ENCODE measurements at regions of chr15 and their contacts with region 1.

Region 1: DNA sequence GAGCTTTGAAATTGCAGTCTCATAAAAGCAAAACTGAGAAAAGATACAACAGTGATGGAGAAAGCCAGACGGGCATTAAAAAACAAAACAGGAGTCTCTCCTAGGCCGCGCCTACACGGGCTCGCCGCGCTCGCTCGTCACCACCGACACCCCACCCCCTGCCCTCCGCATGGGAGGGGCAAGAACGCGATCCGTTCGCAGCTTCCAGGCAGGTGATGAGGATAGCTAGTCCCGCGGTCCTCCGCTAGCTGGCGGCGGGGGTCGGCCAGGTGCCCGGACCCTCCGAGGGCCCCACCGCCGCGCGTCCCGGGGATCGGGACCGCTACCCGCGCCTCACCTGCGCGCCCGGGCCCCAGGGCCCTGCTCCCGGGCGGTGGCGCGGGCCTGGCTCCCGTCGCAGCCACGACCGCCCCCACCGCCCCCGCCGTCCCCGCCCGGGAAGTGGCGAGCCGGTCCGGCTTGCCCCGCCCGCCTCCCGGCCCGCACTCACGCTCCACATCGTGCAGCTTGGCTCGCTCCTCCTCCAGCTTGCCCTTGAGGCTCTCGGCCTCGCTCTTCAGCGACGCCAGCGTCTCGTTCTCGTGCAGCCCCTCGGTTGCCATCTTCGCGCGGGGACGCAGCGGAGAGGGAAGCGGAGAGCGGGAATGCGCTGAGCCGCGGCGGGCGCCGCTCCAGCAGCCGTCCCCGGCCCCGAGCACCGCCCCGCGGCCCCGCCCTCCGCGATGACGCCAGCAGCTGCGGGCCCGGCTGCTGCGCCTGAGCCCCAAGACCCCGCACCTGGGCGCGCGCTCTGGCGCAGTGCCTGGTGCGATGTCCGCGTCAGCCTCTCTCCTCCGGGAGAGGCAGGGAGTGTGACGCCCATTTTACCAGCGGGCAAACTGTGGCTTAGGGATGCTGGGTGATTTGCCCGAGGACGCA is 11.7 kb downstream of the GNB5 start:
- DNase-seq: peak; percentile 91
- H3K4me3 Mint-ChIP-seq: peak overlapping the region; percentile 89
- H3K27ac Mint-ChIP-seq: peak overlapping the region; percentile 91
- H3K4me1 Mint-ChIP-seq: peaks cover 37% of the 10 kb centered on the region
- H3K27me3 Mint-ChIP-seq: no peaks in the 10 kb centered on the region

Region 2: GRCh38 chr15:51971375-51972133 is 208.0 kb before region 1 on chr15 and contains the start of gene LEO1:
- CTCF ChIA-PET with region 1: interaction called, 6 read pairs
- POLR2A ChIA-PET with region 1: interaction called, 18 read pairs
- DNase-seq: peak; percentile 92
- H3K4me3 Mint-ChIP-seq: peak within 1 kb of the TSS; percentile 93
- H3K27ac Mint-ChIP-seq: peak within 1 kb of the TSS; percentile 87
- H3K4me1 Mint-ChIP-seq: peaks cover 33% of the 10 kb centered on the region
- H3K27me3 Mint-ChIP-seq: no peaks in the 10 kb centered on the region
- total RNA-seq, gene LEO1: 31.2 to 32.8 TPM

Region 3: GRCh38 chr15:52163321-52164190 is 16.0 kb before region 1 on chr15:
- CTCF ChIA-PET with region 1: interaction called, 9 read pairs
- POLR2A ChIA-PET with region 1: interaction called, 21 read pairs
- DNase-seq: no peak
- H3K4me3 Mint-ChIP-seq: no peak overlapping the region
- H3K27ac Mint-ChIP-seq: no peak overlapping the region
- H3K4me1 Mint-ChIP-seq: peaks cover 12% of the 10 kb centered on the region
- H3K27me3 Mint-ChIP-seq: no peaks in the 10 kb centered on the region

Region 4: GRCh38 chr15:52208306-52208946 is 28.9 kb after region 1 on chr15:
- CTCF ChIA-PET with region 1: interaction called, 14 read pairs
- POLR2A ChIA-PET with region 1: interaction called, 18 read pairs
- DNase-seq: peak; percentile 84
- H3K4me3 Mint-ChIP-seq: no peak overlapping the region
- H3K27ac Mint-ChIP-seq: no peak overlapping the region
- H3K4me1 Mint-ChIP-seq: peaks cover 2% of the 10 kb centered on the region
- H3K27me3 Mint-ChIP-seq: no peaks in the 10 kb centered on the region

Region 5: GRCh38 chr15:52217186-52217585 is 37.6 kb after region 1 on chr15:
- CTCF ChIA-PET with region 1: interaction called, 7 read pairs
- POLR2A ChIA-PET with region 1: interaction called, 31 read pairs
- DNase-seq: peak; percentile 46
- H3K4me3 Mint-ChIP-seq: no peak overlapping the region
- H3K27ac Mint-ChIP-seq: no peak overlapping the region
- H3K4me1 Mint-ChIP-seq: peaks cover 25% of the 10 kb centered on the region
- H3K27me3 Mint-ChIP-seq: no peaks in the 10 kb centered on the region

Region 6: DNA sequence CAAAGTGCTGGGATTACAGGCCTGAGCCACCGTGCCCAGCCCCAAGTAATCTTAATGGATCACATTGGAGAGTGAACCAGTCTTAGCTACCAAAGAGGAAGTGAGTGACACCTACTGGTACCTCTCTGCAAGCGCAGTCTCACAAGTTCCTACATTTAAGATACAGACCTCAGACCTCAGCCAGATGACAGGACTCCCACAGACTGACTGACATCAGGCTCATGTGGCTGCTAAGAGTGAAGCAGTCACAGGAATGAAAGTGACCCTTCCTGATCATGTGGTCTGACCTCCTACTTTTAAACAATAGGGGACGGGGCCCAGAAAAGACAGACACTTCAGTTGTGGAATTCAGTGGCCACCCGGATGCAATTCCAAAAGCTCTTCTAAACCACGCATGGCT is 47.9 kb after region 1 on chr15:
- CTCF ChIA-PET with region 1: interaction called, 24 read pairs
- POLR2A ChIA-PET with region 1: interaction called, 31 read pairs
- DNase-seq: peak; percentile 77
- H3K4me3 Mint-ChIP-seq: no peak overlapping the region
- H3K27ac Mint-ChIP-seq: no peak overlapping the region
- H3K4me1 Mint-ChIP-seq: peaks cover 18% of the 10 kb centered on the region
- H3K27me3 Mint-ChIP-seq: no peaks in the 10 kb centered on the region

Region 7: DNA sequence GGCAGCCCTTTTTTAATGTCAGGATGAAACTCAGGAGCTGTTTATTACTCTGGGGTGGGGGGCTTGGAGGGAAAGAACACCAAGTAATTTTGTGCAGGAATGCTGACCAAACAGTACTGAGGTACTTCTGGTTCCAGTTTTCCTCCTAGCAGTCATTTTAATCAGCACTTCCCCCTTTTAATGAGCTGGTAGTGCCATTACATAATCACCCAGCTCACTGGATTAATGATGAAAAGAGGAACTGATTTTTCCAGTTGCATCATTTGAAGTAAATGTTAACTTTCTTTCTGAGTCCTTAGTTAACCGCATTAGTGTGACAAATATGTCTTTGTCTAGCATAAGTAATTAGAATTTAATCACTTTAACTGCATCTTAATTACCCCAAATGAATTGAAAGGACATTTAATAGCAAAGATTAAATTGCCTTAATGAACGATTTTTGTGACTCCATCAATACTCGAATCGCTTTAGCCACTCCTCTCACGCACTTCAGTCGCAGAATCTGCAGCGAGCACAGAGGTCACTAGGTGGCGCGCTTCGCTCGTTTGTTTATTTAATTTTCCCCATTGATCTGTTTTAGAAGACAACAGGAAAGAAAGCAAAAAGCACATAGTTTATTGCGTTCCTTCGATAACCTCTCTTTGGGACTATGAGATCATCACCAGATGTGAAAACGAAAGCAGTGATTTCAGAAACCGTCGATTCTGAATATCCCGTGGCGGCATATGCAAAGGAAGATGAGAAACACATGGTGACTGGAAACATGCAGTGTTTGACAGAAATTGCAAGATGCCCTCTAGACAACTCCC is 600.8 kb after region 1 on chr15:
- CTCF ChIA-PET with region 1: no interaction called
- POLR2A ChIA-PET with region 1: no interaction called
- DNase-seq: peak; percentile 80
- H3K4me3 Mint-ChIP-seq: no peak overlapping the region
- H3K27ac Mint-ChIP-seq: no peak overlapping the region
- H3K4me1 Mint-ChIP-seq: peaks cover 16% of the 10 kb centered on the region
- H3K27me3 Mint-ChIP-seq: peaks cover 80% of the 10 kb centered on the region